ENCODE measurements at regions of chr12 and their contacts with region 1.

Region 1: GRCh38 chr12:49933796-49934195 is 16.7 kb upstream of the AQP2 start:
- DNase-seq: no peak
- ATAC-seq: no peak
- H3K4me3 ChIP-seq: no peak overlapping the region
- H3K4me3 Mint-ChIP-seq: no peak overlapping the region
- H3K27ac ChIP-seq: no peak overlapping the region
- H3K27ac Mint-ChIP-seq: no peak overlapping the region
- H3K4me1 ChIP-seq: no peaks in the 10 kb centered on the region
- H3K4me1 Mint-ChIP-seq: no peaks in the 10 kb centered on the region
- H3K27me3 ChIP-seq: no peaks in the 10 kb centered on the region
- H3K27me3 Mint-ChIP-seq: peaks cover 19% of the 10 kb centered on the region
- CTCF ChIP-seq: no peak

Region 2: DNA sequence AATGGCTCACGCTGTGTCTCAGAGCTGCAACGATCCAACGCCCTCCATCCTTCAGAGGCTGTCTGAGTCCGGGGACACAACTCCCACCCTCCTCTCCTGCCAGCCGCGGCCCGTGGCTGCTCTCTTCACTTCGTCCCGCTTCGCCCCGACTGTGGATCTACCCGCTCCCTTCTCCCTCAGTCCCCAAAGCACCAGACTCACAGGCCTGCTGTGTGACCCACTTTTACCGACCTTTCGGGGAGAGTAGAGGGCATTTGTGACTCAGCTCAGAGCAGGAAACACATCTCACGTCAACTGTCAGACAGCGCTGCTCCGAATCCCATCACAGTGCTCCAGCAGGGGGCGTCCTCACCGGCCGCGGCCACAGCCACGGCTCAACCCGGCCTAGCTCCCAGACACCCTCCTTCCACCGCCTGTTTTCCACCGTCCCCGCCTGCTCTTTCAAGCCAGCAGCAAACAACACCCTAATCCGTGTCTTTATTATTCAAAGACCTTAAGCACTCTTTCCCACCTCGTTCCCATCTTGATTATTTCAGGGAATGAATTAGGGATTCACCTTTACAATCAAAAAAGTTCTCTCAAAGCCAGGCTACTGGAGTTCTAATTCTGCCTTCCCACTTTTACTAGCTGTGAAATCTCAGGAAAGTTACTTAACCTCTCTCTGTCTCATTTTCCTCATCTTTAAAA is 11.7 kb after region 1 on chr12:
- CTCF ChIA-PET with region 1: interaction called, 10 read pairs
- POLR2A ChIA-PET with region 1: no interaction called
- intact Hi-C with region 1: no loop called
- DNase-seq: peak; percentile 80
- ATAC-seq: peak; percentile 90
- H3K4me3 ChIP-seq: peak overlapping the region in 4 of 5 experiments; percentile 18 to 48 (median 40)
- H3K4me3 Mint-ChIP-seq: peak overlapping the region; percentile 83
- H3K27ac ChIP-seq: no peak overlapping the region
- H3K27ac Mint-ChIP-seq: no peak overlapping the region
- H3K4me1 ChIP-seq: peaks cover 0 to 8% of the 10 kb centered on the region in 2 donors
- H3K4me1 Mint-ChIP-seq: peaks cover 15% of the 10 kb centered on the region
- H3K27me3 ChIP-seq: peaks cover 0 to 9% (median 4%) of the 10 kb centered on the region in 4 experiments
- H3K27me3 Mint-ChIP-seq: peaks cover 9% of the 10 kb centered on the region
- CTCF ChIP-seq: peak; percentile 89